ENCODE measurements at regions of chr3 and their contacts with region 1.

Region 1: DNA sequence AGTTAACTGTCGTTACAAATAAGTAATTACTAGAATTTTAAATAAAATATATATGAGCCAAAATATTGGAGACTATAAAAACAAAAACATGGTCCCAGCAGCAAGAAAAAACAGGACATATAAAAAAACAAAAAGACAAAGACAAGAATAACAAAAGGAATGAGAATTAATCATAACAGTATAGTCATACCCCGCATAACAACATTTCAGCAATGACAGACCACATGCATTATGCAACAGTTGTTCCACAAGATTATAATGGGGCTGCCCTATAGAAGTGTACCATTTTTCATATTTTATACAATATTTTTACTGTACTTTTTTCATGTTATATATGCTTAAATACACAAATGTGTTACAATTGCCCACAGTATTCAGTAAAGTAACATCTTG is 5.6 kb downstream of the HLTF start:
- DNase-seq: no peak
- H3K4me3 ChIP-seq: no peak overlapping the region
- H3K27ac ChIP-seq: no peak overlapping the region
- H3K4me1 ChIP-seq: peaks cover 36% of the 10 kb centered on the region
- CTCF ChIP-seq: no peak

Region 2: GRCh38 chr3:148847351-148847750 is 233.3 kb before region 1 on chr3:
- CTCF ChIA-PET with region 1: no interaction called
- POLR2A ChIA-PET with region 1: no interaction called
- intact Hi-C with region 1: no loop called
- DNase-seq: no peak
- H3K4me3 ChIP-seq: no peak overlapping the region
- H3K27ac ChIP-seq: no peak overlapping the region
- H3K4me1 ChIP-seq: no peaks in the 10 kb centered on the region
- CTCF ChIP-seq: no peak

Region 3: DNA sequence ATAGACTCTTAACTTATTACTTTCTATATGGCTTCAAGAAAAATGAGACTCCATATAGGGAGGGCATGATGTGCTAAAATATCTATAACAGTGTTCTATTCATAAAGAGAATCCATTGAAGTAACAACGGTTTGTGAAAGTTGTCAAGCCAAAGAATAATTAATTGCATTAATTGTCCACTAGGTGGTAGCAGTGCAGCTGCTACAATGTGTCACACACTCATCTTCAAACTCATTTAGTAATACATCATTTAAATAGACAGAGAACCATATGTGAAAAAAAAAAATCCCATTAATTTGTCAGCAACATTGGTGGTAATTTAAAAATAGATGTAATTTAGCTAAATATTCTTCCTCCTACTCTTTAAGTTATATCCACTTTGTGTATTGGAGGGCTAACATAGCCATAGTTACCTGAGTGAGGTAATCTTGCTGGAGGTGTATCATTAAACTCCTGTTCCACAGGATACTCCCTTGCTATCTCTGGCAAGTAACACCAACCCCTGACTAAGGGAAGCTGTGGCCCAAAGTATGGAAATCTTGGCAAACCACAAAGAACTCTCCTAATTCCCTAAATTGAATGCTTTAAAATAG is 219.3 kb before region 1 on chr3:
- CTCF ChIA-PET with region 1: no interaction called
- POLR2A ChIA-PET with region 1: no interaction called
- intact Hi-C with region 1: no loop called
- DNase-seq: peak; percentile 55
- H3K4me3 ChIP-seq: no peak overlapping the region
- H3K27ac ChIP-seq: no peak overlapping the region
- H3K4me1 ChIP-seq: no peaks in the 10 kb centered on the region
- CTCF ChIP-seq: peak; percentile 94

Region 4: DNA sequence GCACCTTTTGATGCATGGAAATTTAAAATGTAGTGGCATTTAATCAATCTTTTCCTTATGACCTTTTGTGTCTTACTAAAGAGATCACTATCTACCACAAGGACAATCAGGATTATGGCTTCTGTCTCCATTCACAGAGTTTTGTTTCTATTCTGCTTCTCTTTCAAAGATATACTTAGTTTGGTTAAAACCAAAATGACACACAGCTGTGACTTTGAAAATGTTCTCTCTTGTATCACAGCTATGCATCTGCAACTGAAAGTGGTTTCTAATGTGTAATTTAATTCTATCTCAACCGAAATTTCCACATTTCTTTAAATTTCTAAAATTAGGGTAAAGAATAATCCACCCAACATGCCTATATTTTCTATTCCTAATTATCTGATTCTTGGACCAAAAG is 22.1 kb before region 1 on chr3:
- CTCF ChIA-PET with region 1: no interaction called
- POLR2A ChIA-PET with region 1: interaction called, 3 read pairs
- intact Hi-C with region 1: loop called (anchors 2 kb)
- DNase-seq: no peak
- H3K4me3 ChIP-seq: no peak overlapping the region
- H3K27ac ChIP-seq: no peak overlapping the region
- H3K4me1 ChIP-seq: no peaks in the 10 kb centered on the region
- CTCF ChIP-seq: no peak

Measured in OCI-LY7 (cell line).